ENCODE measurements at regions of chr11 and their contacts with region 1.

Region 1: DNA sequence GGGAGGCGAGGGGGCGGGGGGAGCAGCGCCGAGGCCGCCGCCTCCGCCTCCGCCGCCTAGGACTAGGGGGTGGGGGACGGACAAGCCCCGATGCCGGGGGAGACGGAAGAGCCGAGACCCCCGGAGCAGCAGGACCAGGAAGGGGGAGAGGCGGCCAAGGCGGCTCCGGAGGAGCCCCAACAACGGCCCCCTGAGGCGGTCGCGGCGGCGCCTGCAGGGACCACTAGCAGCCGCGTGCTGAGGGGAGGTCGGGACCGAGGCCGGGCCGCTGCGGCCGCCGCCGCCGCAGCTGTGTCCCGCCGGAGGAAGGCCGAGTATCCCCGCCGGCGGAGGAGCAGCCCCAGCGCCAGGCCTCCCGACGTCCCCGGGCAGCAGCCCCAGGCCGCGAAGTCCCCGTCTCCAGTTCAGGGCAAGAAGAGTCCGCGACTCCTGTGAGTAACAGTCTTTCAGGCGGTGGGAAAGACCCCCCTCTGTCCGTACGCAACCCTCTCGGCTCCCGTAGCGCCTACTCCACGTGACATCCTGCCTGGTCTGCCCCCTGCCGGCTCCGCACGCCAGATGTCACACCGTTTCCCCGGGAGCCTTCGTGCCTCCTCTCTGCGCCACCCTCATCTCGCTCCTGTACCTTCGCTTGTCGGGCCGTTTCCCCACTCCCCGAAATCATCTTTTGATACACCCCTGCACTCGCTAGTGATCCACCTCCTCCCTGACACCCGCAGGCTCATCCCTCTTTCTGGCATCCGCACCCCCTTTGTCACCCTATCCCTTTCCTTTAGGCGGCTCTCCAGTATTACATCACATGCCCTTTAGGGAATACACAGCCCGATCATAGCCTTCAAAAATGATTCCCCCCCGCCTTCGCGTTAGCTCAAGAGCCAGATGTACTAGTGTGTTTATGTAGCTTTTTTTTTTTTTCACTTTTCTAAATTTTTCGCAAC is 598 bp downstream of the ZFP91 start:
- DNase-seq: peak; percentile 96
- ATAC-seq: peak; percentile 37
- H3K4me3 ChIP-seq: peak overlapping the region; percentile 71 to 100 (median 99)
- H3K4me3 Mint-ChIP-seq: peak overlapping the region; percentile 97
- H3K27ac ChIP-seq: peak overlapping the region; percentile 89 to 100
- H3K27ac Mint-ChIP-seq: peak overlapping the region; percentile 100
- H3K4me1 ChIP-seq: peaks cover 48 to 52% of the 10 kb centered on the region in 2 donors
- H3K4me1 Mint-ChIP-seq: peaks cover 64% of the 10 kb centered on the region
- H3K27me3 ChIP-seq: no peaks in the 10 kb centered on the region
- H3K27me3 Mint-ChIP-seq: no peaks in the 10 kb centered on the region
- CTCF ChIP-seq: peak; percentile 79

Region 2: DNA sequence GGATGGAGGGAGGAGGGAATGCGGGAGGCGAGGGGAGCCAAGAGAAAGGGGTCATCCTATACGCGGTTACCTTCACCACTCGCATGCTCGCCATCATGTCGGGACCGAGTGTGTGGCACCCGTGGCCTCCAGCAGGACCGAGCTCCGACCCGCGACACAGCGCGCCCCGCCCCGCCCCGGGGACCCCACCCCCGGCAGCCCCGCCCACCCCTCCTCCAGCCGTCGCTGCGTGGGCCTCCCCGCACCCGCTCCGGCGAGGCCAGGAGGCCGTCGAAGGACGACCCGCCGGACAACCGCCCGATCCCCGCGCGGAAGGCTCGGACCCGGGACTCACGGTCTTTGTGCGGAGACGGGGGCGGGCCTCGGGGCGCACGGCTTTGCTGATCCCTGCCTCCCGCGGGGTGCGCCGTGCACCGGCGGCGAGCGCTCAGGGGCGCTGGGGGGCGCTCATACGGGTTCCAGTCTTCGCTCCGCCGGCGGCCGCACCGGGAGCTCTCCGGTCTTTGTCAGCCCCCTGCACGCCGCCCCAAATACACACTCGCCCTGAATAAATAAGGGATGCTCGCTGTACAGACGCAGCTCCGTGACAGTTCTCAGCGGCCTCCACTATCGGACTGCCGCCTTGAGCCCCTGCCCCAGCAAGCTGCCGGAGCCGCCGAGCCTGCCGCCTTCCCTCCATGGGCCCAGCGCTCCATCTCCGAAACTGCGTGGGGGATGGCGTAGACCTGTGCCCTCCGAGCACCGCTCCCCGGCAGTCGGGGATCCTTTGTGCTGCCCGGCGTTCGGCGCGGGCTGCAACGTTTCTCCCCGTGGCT is 1011.7 kb before region 1 on chr11 and contains the start of gene UBE2L6:
- CTCF ChIA-PET with region 1: interaction called, 3 read pairs
- POLR2A ChIA-PET with region 1: no interaction called
- intact Hi-C with region 1: loop called (anchors 5 kb)
- DNase-seq: peak; percentile 82
- ATAC-seq: peak; percentile 69
- H3K4me3 ChIP-seq: peak within 1 kb of the TSS; percentile 83 to 99 (median 98)
- H3K4me3 Mint-ChIP-seq: peak within 1 kb of the TSS; percentile 99
- H3K27ac ChIP-seq: peak within 1 kb of the TSS; percentile 83 to 92
- H3K27ac Mint-ChIP-seq: peak within 1 kb of the TSS; percentile 99
- H3K4me1 ChIP-seq: peaks cover 18 to 26% of the 10 kb centered on the region in 2 donors
- H3K4me1 Mint-ChIP-seq: peaks cover 36% of the 10 kb centered on the region
- H3K27me3 ChIP-seq: no peaks in the 10 kb centered on the region
- H3K27me3 Mint-ChIP-seq: no peaks in the 10 kb centered on the region
- CTCF ChIP-seq: peak; percentile 95
- total RNA-seq, gene UBE2L6: 66.3 and 70.7 TPM in 2 replicates

Region 3: GRCh38 chr11:58567889-58568512 is 11.5 kb before region 1 on chr11:
- CTCF ChIA-PET with region 1: interaction called, 102 read pairs
- POLR2A ChIA-PET with region 1: interaction called, 4 read pairs
- intact Hi-C with region 1: loop called (anchors 1 kb)
- DNase-seq: peak; percentile 87
- ATAC-seq: peak; percentile 98
- H3K4me3 ChIP-seq: no peak overlapping the region
- H3K4me3 Mint-ChIP-seq: peak overlapping the region; percentile 1
- H3K27ac ChIP-seq: no peak overlapping the region
- H3K27ac Mint-ChIP-seq: peak overlapping the region; percentile 5
- H3K4me1 ChIP-seq: peaks cover 19 to 21% of the 10 kb centered on the region in 2 donors
- H3K4me1 Mint-ChIP-seq: peaks cover 42% of the 10 kb centered on the region
- H3K27me3 ChIP-seq: no peaks in the 10 kb centered on the region
- H3K27me3 Mint-ChIP-seq: no peaks in the 10 kb centered on the region
- CTCF ChIP-seq: peak; percentile 82

Region 4: GRCh38 chr11:59106363-59107336 is 527.2 kb after region 1 on chr11 and contains the start of gene FAM111B:
- CTCF ChIA-PET with region 1: interaction called, 3 read pairs
- POLR2A ChIA-PET with region 1: interaction called, 3 read pairs
- intact Hi-C with region 1: loop called (anchors 1 kb)
- DNase-seq: peak; percentile 73
- ATAC-seq: peak; percentile 48
- H3K4me3 ChIP-seq: peak within 1 kb of the TSS; percentile 47 to 79 (median 61)
- H3K4me3 Mint-ChIP-seq: peak within 1 kb of the TSS; percentile 94
- H3K27ac ChIP-seq: peak within 1 kb of the TSS; percentile 25 to 59
- H3K27ac Mint-ChIP-seq: peak within 1 kb of the TSS; percentile 93
- H3K4me1 ChIP-seq: peaks cover 64 to 72% of the 10 kb centered on the region in 2 donors
- H3K4me1 Mint-ChIP-seq: peaks cover 83% of the 10 kb centered on the region
- H3K27me3 ChIP-seq: no peaks in the 10 kb centered on the region
- H3K27me3 Mint-ChIP-seq: no peaks in the 10 kb centered on the region
- CTCF ChIP-seq: no peak
- total RNA-seq, gene FAM111B: 148 and 155 TPM in 2 replicates

Region 5: DNA sequence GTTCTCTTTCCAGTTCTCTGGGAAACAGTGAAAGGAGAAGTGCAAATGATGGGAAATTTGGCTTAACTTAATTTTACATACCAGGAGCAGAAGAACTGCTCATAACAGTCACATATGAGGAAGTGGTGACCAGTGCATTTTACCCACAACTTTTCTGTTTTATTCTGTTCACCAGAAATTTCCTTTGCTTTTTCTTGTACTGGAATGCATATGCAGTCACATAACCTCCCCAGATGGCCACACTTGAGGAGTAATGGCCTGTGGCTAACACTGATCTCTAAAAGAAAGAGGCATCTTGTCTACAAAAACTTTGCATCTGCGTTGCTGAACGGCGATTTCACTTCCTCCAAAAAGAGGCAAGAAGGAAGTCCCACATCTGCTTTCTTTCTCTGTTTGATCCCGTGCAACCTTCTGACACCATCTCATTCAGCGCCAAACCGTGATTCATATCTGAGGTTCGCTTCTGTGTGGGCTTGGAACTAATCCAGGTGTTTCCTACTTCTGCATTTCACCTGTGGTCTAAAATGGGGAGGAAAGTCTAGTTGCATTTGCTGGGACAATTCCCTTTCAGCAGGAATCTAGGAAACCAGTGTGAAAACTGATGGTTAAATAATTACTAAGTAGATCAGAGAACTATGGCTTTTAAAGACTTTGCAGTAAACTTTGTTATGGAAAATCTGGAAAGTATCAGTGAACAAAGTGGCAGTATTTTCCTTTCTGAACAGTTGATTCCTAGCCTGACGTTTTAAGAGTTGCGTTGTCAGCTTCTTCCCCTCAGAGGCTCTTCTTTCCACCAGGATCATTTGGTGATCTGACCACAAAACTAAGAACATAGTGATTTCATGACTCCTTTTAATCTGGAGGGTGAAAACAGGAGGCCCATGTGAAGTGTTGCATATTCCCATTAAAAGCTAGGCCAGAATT is 637.4 kb after region 1 on chr11:
- CTCF ChIA-PET with region 1: no interaction called
- POLR2A ChIA-PET with region 1: no interaction called
- intact Hi-C with region 1: loop called (anchors 5 kb)
- DNase-seq: peak; percentile 95
- ATAC-seq: peak; percentile 72
- H3K4me3 ChIP-seq: peak overlapping the region in 4 of 5 experiments; percentile 12 to 46 (median 16)
- H3K4me3 Mint-ChIP-seq: peak overlapping the region; percentile 78
- H3K27ac ChIP-seq: peak overlapping the region; percentile 82 to 94
- H3K27ac Mint-ChIP-seq: peak overlapping the region; percentile 95
- H3K4me1 ChIP-seq: peaks cover 93 to 94% of the 10 kb centered on the region in 2 donors
- H3K4me1 Mint-ChIP-seq: peaks cover 96% of the 10 kb centered on the region
- H3K27me3 ChIP-seq: no peaks in the 10 kb centered on the region
- H3K27me3 Mint-ChIP-seq: no peaks in the 10 kb centered on the region
- CTCF ChIP-seq: no peak

Region 6: DNA sequence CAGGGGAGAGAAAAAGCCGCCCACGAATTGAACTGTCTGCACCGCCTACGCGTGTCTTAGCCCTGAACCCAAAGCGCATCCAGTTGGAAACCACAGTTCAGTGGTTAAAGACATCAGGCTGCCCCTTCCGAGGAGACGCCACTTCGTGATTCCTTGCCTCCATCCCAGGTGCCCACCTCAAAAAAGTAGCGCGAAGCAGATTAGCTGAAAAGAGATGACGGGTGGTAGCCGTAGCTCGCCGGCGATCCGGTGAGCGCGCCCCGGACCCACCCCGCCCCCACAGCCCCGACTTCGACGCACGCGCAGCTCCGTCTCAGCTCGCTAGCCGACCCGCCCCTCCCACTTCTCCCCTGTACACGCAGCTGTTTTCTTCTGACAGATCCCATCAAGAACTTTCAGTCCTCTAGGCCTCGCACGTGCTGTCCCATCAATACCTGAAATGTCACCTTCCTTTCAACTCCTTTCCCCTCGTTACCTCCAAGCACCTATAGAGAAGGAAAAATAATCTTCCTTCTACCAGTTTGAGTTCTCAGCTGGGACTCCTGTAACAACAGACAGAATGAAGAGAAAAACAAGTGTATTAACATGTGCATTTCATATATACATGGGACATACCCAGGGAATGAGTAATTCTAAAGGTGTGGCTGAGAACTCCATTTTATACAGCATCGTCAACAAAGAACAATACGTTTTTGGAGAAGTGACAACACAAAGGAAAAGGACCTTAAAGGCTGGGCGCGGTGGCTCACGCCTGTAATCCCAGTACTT is 981.4 kb after region 1 on chr11:
- CTCF ChIA-PET with region 1: no interaction called
- POLR2A ChIA-PET with region 1: no interaction called
- intact Hi-C with region 1: loop called (anchors 10 kb)
- DNase-seq: peak; percentile 92
- ATAC-seq: peak; percentile 79
- H3K4me3 ChIP-seq: peak overlapping the region; percentile 84 to 98 (median 92)
- H3K4me3 Mint-ChIP-seq: peak overlapping the region; percentile 95
- H3K27ac ChIP-seq: peak overlapping the region; percentile 72 to 84
- H3K27ac Mint-ChIP-seq: peak overlapping the region; percentile 98
- H3K4me1 ChIP-seq: peaks cover 22 to 49% of the 10 kb centered on the region in 2 donors
- H3K4me1 Mint-ChIP-seq: peaks cover 44% of the 10 kb centered on the region
- H3K27me3 ChIP-seq: peaks cover 0 to 3% (median 1%) of the 10 kb centered on the region in 4 experiments
- H3K27me3 Mint-ChIP-seq: no peaks in the 10 kb centered on the region
- CTCF ChIP-seq: no peak

Measured in B cell (primary cell).